Endothelial cell of umbilical vein (primary cell): ENCODE measurements at regions of chr19 and their contacts with region 1.

Region 1: GRCh38 chr19:42092350-42092749 is 16.4 kb downstream of the ZNF574 start:
- DNase-seq: peak; percentile 92
- H3K4me3 ChIP-seq: no peak overlapping the region
- H3K27ac ChIP-seq: peak overlapping the region; percentile 13
- H3K4me1 ChIP-seq: peaks cover 29% of the 10 kb centered on the region
- H3K27me3 ChIP-seq: no peaks in the 10 kb centered on the region
- CTCF ChIP-seq: peak; percentile 75 to 89
- POLR2A ChIP-seq: peak; percentile 32

Region 2: GRCh38 chr19:41998246-41999020 is 93.9 kb before region 1 on chr19:
- CTCF ChIA-PET with region 1: interaction called, 4 read pairs
- POLR2A ChIA-PET with region 1: no interaction called
- dilution Hi-C with region 1: no loop called
- intact Hi-C with region 1: loop called (anchors 1 kb)
- DNase-seq: no peak
- H3K4me3 ChIP-seq: no peak overlapping the region
- H3K27ac ChIP-seq: no peak overlapping the region
- H3K4me1 ChIP-seq: no peaks in the 10 kb centered on the region
- H3K27me3 ChIP-seq: peaks cover 19 to 30% of the 10 kb centered on the region in 2 experiments
- CTCF ChIP-seq: peak; percentile 72 to 82
- POLR2A ChIP-seq: no peak

Region 3: GRCh38 chr19:42075616-42076379 is 16.6 kb before region 1 on chr19 and contains the start of gene ZNF574:
- CTCF ChIA-PET with region 1: interaction called, 6 read pairs
- POLR2A ChIA-PET with region 1: no interaction called
- dilution Hi-C with region 1: no loop called
- intact Hi-C with region 1: loop called (anchors 1 kb)
- DNase-seq: peak; percentile 100
- H3K4me3 ChIP-seq: peak within 1 kb of the TSS; percentile 89 to 92 (median 90)
- H3K27ac ChIP-seq: peak within 1 kb of the TSS; percentile 85
- H3K4me1 ChIP-seq: peaks cover 16% of the 10 kb centered on the region
- H3K27me3 ChIP-seq: peaks cover 2% of the 10 kb centered on the region in 2 experiments
- CTCF ChIP-seq: no peak
- POLR2A ChIP-seq: no peak
- total RNA-seq, gene ZNF574: 14.0 and 15.3 TPM in 2 replicates

Region 4: DNA sequence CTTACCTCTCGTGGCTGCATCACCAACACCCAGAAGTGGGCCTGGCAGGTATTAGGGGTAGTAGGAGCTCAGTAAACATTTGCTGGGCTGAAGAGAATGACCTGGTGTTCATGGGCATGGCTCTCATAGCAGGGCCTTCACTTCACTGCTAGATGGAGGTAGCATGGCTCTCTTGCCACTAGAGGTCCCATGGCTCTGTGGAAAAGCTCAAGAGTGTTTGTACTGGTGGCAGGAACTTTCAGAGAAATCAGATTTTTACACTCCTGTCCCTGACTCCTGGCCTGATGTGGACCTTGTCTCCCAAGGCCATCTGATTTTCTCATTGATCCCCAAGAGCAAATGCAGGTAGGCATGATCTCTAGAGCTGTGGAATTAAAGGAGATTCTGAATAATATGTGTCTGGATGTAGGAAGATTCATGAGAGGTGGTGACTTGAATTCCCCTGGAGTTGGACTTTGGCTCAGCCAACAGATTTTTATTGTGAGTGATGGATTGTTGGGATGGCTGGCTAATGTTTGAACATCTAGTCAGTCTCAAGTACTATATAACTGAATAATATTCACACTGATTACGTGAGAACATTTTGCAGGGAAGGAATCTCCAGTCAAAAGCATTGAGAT is 10.7 kb before region 1 on chr19:
- CTCF ChIA-PET with region 1: interaction called, 17 read pairs
- POLR2A ChIA-PET with region 1: no interaction called
- dilution Hi-C with region 1: no loop called
- intact Hi-C with region 1: loop called (anchors 1 kb)
- DNase-seq: peak; percentile 64
- H3K4me3 ChIP-seq: no peak overlapping the region
- H3K27ac ChIP-seq: no peak overlapping the region
- H3K4me1 ChIP-seq: peaks cover 11% of the 10 kb centered on the region
- H3K27me3 ChIP-seq: no peaks in the 10 kb centered on the region
- CTCF ChIP-seq: peak; percentile 47 to 74
- POLR2A ChIP-seq: peak; percentile 30

Region 5: DNA sequence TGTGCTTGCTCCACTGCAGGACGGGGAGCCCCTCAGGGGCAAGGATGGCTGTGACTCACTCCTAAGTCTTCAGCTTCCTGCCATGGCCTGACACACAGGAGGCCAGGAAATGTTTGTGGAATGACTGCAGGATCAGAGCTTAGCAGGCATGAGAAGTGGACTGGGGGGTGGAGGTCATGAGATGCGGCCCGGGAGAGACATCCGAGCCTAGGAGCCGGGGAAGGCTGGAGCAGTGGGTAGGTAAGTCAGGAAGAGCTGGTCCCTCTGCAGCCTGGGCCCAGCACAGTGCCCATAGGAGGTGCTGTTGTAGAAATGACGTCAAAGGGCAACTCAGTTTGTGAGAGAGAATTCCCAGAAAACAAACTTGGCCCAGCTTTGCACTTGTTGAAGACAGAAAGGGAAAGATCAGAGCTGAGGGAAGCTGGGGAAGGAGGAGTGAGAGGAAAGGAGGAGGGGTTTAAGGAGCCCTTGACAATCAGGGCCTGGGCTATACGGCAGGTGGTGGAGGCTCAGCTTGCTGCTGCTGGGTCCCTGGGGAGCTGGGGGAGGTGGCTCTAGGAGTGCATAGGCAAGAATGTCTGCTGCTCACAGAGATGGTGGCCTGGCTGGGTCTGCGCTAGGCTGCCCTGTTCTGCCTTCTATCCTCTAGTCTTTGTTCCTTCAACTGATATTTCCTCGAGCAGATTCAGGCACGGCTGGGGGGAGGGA is 21.4 kb after region 1 on chr19:
- CTCF ChIA-PET with region 1: interaction called, 10 read pairs
- POLR2A ChIA-PET with region 1: interaction called, 3 read pairs
- dilution Hi-C with region 1: no loop called
- intact Hi-C with region 1: no loop called
- DNase-seq: peak; percentile 97
- H3K4me3 ChIP-seq: no peak overlapping the region
- H3K27ac ChIP-seq: peak overlapping the region; percentile 88
- H3K4me1 ChIP-seq: peaks cover 29% of the 10 kb centered on the region
- H3K27me3 ChIP-seq: no peaks in the 10 kb centered on the region
- CTCF ChIP-seq: peak; percentile 26 to 47
- POLR2A ChIP-seq: peak; percentile 42